ENCODE measurements at regions of chr4 and their contacts with region 1.

Region 1: DNA sequence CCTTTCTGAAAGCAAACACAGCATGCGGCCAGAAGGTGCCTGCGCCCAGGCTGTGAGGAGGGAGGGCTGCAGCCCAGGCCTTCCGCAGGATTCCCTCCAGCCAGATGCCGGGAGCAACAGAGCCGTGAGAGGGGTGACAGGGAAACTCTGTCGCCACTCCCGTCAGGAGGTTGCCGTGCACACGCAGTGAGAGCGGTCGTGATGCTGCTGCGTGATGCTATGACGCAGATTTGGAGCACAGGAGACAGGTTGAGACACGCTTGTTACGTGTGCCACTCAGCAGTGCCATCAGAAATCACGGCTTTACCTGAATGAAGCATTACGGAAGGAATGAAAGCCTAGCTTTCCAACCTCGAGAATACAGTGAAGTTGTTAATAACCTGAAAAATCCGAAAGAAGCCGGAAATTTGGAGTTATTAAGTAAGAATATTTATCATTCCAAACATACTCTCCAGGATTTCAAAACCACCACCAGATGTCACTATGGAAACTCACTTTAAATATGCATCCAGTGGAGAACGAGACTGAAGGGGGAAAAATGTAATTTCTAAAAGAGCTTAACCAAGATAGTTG is 54.4 kb downstream of the FAT1 start:
- H3K4me3 ChIP-seq: no peak overlapping the region
- H3K27ac ChIP-seq: no peak overlapping the region
- H3K4me1 ChIP-seq: peaks cover 3% of the 10 kb centered on the region; the same call in 1 of the 2 replicates
- CTCF ChIP-seq: no peak

Region 2: GRCh38 chr4:185597532-185598188 is 1071.6 kb before region 1 on chr4:
- CTCF ChIA-PET with region 1: no interaction called
- POLR2A ChIA-PET with region 1: no interaction called
- H3K4me3 ChIP-seq: no peak overlapping the region
- H3K27ac ChIP-seq: no peak overlapping the region
- H3K4me1 ChIP-seq: no peaks in the 10 kb centered on the region
- CTCF ChIP-seq: peak; percentile 53; the same call in 1 of the 2 replicates

Region 3: GRCh38 chr4:186651624-186652023 is 17.6 kb before region 1 on chr4:
- CTCF ChIA-PET with region 1: no interaction called
- POLR2A ChIA-PET with region 1: no interaction called
- H3K4me3 ChIP-seq: no peak overlapping the region
- H3K27ac ChIP-seq: no peak overlapping the region
- H3K4me1 ChIP-seq: peaks cover 13% of the 10 kb centered on the region; the same call in 1 of the 2 replicates
- CTCF ChIP-seq: no peak

Region 4: GRCh38 chr4:186719925-186720694 is 50.9 kb after region 1 on chr4:
- CTCF ChIA-PET with region 1: interaction called, 13 read pairs
- POLR2A ChIA-PET with region 1: no interaction called
- H3K4me3 ChIP-seq: no peak overlapping the region
- H3K27ac ChIP-seq: no peak overlapping the region
- H3K4me1 ChIP-seq: no peaks in the 10 kb centered on the region
- CTCF ChIP-seq: no peak

Measured in HEK293 (cell line).